ENCODE measurements at regions of chr15 and their contacts with region 1.

Region 1: GRCh38 chr15:72117486-72118399 is at the start of gene MYO9A:
- DNase-seq: peak; percentile 99
- total RNA-seq, gene MYO9A: 61.4 to 68.2 TPM

Region 2: GRCh38 chr15:71874245-71874644 is 243.5 kb before region 1 on chr15:
- intact Hi-C with region 1: no loop called
- DNase-seq: no peak

Region 3: DNA sequence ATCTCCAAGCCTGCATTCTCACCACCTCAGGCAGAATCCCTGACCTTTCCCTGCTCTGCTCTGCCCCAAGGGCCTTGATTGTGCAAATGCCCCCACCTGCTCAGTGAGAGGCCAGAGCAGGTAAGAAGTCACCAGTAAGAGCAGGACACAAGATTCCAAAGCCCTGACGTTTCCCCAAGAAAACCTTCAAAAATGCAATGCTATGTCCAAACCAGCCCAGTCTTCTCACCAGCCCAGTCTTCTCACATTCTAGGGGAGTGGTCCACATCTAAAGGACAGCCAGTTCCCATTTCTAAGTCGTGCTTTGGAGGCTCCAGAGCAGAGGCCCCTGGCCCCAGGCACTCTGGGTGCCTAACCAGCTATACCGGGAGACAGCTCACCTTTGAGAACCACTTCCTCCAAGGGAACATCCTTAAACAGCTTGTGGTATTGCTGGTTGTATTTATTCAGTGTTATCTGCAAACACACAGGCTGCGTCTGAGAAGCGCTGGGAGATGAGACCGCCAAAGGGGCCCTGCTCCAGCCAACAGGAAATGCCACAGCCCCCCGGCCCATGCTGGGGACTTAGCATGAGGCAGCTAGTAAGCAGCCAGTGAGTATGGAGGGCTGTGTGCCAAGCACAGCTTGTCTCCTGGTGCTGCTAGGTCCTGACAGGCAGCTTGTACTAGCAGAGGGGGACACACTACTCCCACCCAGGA is 50.5 kb after region 1 on chr15:
- intact Hi-C with region 1: no loop called
- DNase-seq: no peak

Region 4: DNA sequence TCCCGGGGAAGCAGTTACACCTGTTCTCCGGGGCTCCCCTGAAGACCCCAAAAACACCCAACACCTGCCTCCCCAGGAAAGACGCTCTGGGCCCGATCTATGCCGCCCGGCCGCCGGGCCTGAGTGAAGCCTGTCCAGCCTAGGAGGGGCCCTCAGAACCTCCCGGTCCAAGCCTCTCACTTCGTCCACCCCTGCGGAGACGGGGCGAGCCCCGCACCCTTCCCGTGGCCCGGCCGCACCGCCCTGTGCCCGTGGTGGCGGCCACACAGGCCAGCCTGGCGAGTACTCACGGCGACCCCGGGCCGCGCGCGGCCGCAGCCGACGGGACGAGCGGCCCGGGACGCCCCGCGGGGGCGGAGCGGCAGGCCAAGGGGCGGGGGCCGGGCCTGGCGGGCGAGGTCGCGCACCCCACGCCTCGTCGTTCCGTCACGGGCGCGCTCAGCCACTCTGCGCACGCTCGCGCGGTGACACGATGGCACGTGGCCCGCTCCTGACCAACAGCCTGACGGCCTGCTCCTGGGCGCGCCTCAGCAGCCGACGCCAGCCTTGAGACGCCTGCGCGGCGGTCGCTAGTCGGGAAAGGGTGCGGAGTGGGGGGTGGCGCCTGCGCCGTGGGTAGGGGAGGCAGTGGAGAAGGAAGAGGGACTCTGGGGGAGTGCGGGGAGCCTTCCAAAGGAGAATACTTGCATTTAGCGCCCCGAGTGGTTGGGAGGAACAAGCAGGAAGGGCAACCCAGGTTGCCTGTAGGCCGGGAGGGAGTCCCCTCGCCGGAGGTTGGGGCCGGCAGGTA is 154.7 kb after region 1 on chr15 and contains the start of gene PARP6:
- intact Hi-C with region 1: loop called in 1 of 2 experiments (anchors 5 kb)
- DNase-seq: peak; percentile 100
- total RNA-seq, gene PARP6: 37.6 to 57.0 TPM